ENCODE measurements at regions of chr1 and their contacts with region 1.

Region 1: DNA sequence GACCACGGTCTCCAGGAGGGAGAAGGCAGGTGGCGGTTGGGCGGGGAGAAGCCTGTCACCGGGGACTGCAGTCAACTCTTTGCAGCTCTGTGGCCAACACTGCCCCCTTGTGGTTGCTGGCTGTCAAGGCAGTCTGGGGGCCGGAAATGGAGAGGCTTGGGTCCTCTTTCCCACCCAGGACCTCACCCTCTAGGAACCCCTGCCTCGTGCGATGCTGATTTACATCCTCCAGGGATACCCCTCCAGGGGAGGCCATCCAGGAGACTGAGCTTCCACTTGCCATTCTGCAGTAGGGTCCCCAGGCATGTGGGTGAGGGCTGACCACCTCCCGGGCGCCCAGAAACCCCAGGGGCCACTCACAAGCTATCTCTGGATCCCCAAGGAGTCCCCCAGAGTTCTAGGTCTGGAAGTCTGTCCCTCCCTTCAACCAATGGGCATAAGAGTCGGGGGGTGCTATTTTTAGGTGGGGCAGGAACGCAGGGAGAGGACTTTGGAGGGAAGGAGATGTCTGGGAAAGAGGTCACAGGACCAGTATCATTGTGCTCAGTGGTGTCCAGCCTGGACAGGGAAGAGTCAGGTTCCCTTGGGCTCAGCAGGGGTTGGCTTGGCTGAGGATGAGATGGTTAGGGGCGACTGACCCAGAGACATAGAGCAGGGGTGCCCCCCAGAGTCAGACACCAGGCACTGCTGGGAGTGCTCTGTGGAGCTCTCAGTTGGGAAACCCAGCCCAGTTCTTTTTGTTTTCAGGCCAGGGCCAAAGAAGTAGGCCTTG is 7.1 kb upstream of the GPR61 start:
- DNase-seq: peak; percentile 94
- ATAC-seq: peak; percentile 90
- H3K4me3 Mint-ChIP-seq: peak overlapping the region; percentile 48
- H3K27ac Mint-ChIP-seq: peak overlapping the region; percentile 91
- H3K4me1 Mint-ChIP-seq: peaks cover 23% of the 10 kb centered on the region
- H3K27me3 Mint-ChIP-seq: no peaks in the 10 kb centered on the region

Region 2: GRCh38 chr1:109075531-109076490 is 456.7 kb before region 1 on chr1 and contains the start of gene TAF13:
- CTCF ChIA-PET with region 1: no interaction called
- DNase-seq: peak; percentile 94
- ATAC-seq: peak; percentile 100
- H3K4me3 Mint-ChIP-seq: peak within 1 kb of the TSS; percentile 96
- H3K27ac Mint-ChIP-seq: peak within 1 kb of the TSS; percentile 96
- H3K4me1 Mint-ChIP-seq: peaks cover 18% of the 10 kb centered on the region
- H3K27me3 Mint-ChIP-seq: no peaks in the 10 kb centered on the region
- total RNA-seq, gene TAF13: 18.1 to 26.4 TPM

Region 3: GRCh38 chr1:109201123-109201703 is 331.3 kb before region 1 on chr1:
- CTCF ChIA-PET with region 1: interaction called, 10 read pairs
- DNase-seq: peak; percentile 65
- ATAC-seq: peak; percentile 59
- H3K4me3 Mint-ChIP-seq: no peak overlapping the region
- H3K27ac Mint-ChIP-seq: no peak overlapping the region
- H3K4me1 Mint-ChIP-seq: peaks cover 17% of the 10 kb centered on the region
- H3K27me3 Mint-ChIP-seq: no peaks in the 10 kb centered on the region

Region 4: DNA sequence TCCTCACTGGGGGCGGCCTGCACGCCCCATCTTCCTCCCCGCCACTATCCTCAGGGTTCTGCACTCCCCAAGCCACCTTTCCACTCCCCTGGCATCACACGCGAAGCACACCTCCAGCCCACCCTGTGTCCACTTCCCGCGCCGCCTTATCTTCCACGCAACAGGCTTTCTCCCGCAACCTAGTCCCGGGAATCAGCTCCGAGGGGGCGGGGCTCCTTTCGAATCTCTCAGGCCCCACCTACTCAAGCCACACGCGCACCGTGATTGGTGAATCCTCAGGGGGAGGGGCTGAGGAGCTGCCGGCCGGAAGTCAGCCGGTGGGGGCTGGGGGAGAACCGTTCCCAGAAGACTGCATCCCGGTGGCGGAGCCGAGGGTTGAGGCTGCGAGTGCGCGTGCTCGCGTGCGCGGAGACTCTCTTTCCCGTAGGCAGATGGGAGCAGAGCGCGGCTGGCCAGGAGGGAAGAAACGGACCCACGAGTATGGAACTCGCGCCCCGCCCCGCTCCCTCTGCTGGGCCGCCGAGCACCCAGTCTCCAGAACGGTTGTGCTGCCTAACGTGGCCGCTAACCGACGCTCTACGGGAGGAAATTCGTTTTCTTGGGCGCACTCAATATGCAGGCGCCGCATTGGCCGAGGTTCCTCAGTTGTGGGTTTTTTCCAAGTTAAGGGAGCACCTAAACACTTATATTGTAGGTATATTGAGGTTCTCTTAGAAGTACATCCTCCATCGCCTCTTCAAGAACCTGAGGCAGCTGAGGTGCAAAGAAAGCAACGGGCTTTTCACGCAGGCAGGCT is 249.4 kb before region 1 on chr1 and contains the start of gene PSRC1:
- CTCF ChIA-PET with region 1: interaction called, 62 read pairs
- DNase-seq: peak; percentile 94
- ATAC-seq: peak; percentile 97
- H3K4me3 Mint-ChIP-seq: peak within 1 kb of the TSS; percentile 98
- H3K27ac Mint-ChIP-seq: peak within 1 kb of the TSS; percentile 96
- H3K4me1 Mint-ChIP-seq: peaks cover 25% of the 10 kb centered on the region
- H3K27me3 Mint-ChIP-seq: no peaks in the 10 kb centered on the region
- total RNA-seq, gene PSRC1: 19.6 to 36.1 TPM

Region 5: GRCh38 chr1:109412551-109412950 is 120.0 kb before region 1 on chr1:
- CTCF ChIA-PET with region 1: interaction called, 10 read pairs
- DNase-seq: no peak
- ATAC-seq: no peak
- H3K4me3 Mint-ChIP-seq: no peak overlapping the region
- H3K27ac Mint-ChIP-seq: no peak overlapping the region
- H3K4me1 Mint-ChIP-seq: peaks cover 21% of the 10 kb centered on the region
- H3K27me3 Mint-ChIP-seq: no peaks in the 10 kb centered on the region

Region 6: GRCh38 chr1:109493805-109494539 is 38.6 kb before region 1 on chr1 and contains the start of gene CYB561D1:
- CTCF ChIA-PET with region 1: interaction called, 1,550 read pairs
- DNase-seq: peak; percentile 92
- ATAC-seq: peak; percentile 92
- H3K4me3 Mint-ChIP-seq: peak within 1 kb of the TSS; percentile 99
- H3K27ac Mint-ChIP-seq: peak within 1 kb of the TSS; percentile 87
- H3K4me1 Mint-ChIP-seq: peaks cover 46% of the 10 kb centered on the region
- H3K27me3 Mint-ChIP-seq: no peaks in the 10 kb centered on the region
- total RNA-seq, gene CYB561D1: 11.0 to 15.0 TPM

Region 7: DNA sequence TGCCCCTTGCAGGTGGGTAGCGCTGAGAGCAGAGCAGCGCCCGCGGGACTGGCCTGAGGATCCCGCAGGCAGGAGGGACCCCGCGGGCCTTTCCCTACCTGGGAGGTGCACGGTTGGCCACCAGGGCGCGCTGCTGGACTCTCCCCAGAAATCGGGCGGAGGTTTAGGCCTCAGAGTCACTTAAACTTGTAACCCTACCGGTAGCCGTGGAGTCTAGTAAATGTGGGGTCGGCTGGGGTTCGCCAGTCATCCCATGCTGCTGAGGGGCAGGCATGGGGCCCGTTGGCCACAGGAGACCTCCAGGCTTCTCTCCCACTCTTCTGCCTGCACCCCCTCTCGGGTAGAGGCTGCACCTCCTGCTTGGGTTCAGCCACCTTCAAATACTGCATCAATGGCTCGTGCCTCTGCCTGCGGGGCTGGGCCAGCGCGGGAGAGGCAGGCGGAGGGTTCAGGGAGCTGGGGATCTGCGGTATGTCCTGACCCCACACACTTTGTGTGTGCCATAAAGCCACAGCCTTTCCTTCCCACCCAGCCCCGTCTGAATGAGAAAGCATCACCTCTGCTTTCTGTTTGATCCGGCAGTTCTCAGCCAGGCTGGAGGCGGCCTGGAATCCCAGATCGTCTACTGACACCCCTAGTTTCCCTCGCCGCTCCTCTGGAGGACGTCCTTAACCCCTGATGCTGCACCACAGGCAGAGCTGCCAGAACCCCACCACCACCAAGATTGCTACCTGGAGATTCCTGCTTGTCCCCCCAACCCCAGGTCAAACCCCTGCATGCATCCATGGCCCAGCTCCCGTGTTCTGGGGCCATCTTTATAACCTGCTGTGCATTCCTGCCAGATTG is 111.1 kb after region 1 on chr1:
- CTCF ChIA-PET with region 1: interaction called, 25 read pairs
- DNase-seq: peak; percentile 93
- ATAC-seq: peak; percentile 97
- H3K4me3 Mint-ChIP-seq: no peak overlapping the region
- H3K27ac Mint-ChIP-seq: no peak overlapping the region
- H3K4me1 Mint-ChIP-seq: peaks cover 11% of the 10 kb centered on the region
- H3K27me3 Mint-ChIP-seq: peaks cover 2% of the 10 kb centered on the region